ENCODE measurements at regions of chr16 and their contacts with region 1.

Region 1: GRCh38 chr16:57667526-57668258 is 414 bp upstream of the ADGRG3 start:
- DNase-seq: peak in 1 of 2 experiments; percentile 44
- H3K4me3 ChIP-seq: no peak overlapping the region
- H3K27ac ChIP-seq: no peak overlapping the region
- H3K4me1 ChIP-seq: peaks cover 21% of the 10 kb centered on the region
- H3K27me3 ChIP-seq: no peaks in the 10 kb centered on the region
- CTCF ChIP-seq: peak; percentile 62

Region 2: GRCh38 chr16:57704011-57704904 is 36.6 kb after region 1 on chr16:
- CTCF ChIA-PET with region 1: no interaction called
- POLR2A ChIA-PET with region 1: no interaction called
- intact Hi-C with region 1: no loop called
- DNase-seq: no peak
- H3K4me3 ChIP-seq: no peak overlapping the region
- H3K27ac ChIP-seq: no peak overlapping the region
- H3K4me1 ChIP-seq: no peaks in the 10 kb centered on the region
- H3K27me3 ChIP-seq: no peaks in the 10 kb centered on the region
- CTCF ChIP-seq: no peak

Region 3: GRCh38 chr16:57720142-57720575 is 52.5 kb after region 1 on chr16:
- CTCF ChIA-PET with region 1: no interaction called
- POLR2A ChIA-PET with region 1: no interaction called
- intact Hi-C with region 1: no loop called
- DNase-seq: peak in 1 of 2 experiments; percentile 59
- H3K4me3 ChIP-seq: no peak overlapping the region
- H3K27ac ChIP-seq: no peak overlapping the region
- H3K4me1 ChIP-seq: no peaks in the 10 kb centered on the region
- H3K27me3 ChIP-seq: peaks cover 10% of the 10 kb centered on the region; the same call in 1 of the 2 replicates
- CTCF ChIP-seq: peak; percentile 75

Region 4: GRCh38 chr16:58249780-58250478 is 582.2 kb after region 1 on chr16:
- CTCF ChIA-PET with region 1: interaction called, 12 read pairs
- POLR2A ChIA-PET with region 1: no interaction called
- intact Hi-C with region 1: no loop called
- DNase-seq: peak; percentile 78 to 92
- H3K4me3 ChIP-seq: peak overlapping the region; percentile 82
- H3K27ac ChIP-seq: peak overlapping the region; percentile 57
- H3K4me1 ChIP-seq: peaks cover 11% of the 10 kb centered on the region
- H3K27me3 ChIP-seq: no peaks in the 10 kb centered on the region
- CTCF ChIP-seq: no peak

Measured in PC-9 (cell line).